CD8-positive, alpha-beta T cell (primary cell): ENCODE measurements at regions of chr19 and their contacts with region 1.

Region 1: GRCh38 chr19:35013031-35013819 is 13.1 kb downstream of the GRAMD1A start:
- DNase-seq: peak; percentile 72 to 92 (median 89)
- ATAC-seq: peak; percentile 81
- H3K4me3 ChIP-seq: peak overlapping the region; percentile 23 to 46
- H3K4me3 Mint-ChIP-seq: peak overlapping the region; percentile 91
- H3K27ac ChIP-seq: peak overlapping the region; percentile 64 to 78
- H3K27ac Mint-ChIP-seq: peak overlapping the region; percentile 99
- H3K4me1 ChIP-seq: peaks cover 74% of the 10 kb centered on the region
- H3K4me1 Mint-ChIP-seq: peaks cover 69% of the 10 kb centered on the region
- H3K27me3 ChIP-seq: no peaks in the 10 kb centered on the region
- H3K27me3 Mint-ChIP-seq: no peaks in the 10 kb centered on the region
- CTCF ChIP-seq: peak; percentile 99

Region 2: GRCh38 chr19:34851353-34851752 is 161.9 kb before region 1 on chr19:
- CTCF ChIA-PET with region 1: no interaction called
- POLR2A ChIA-PET with region 1: no interaction called
- intact Hi-C with region 1: loop called (anchors 5 kb)
- DNase-seq: peak in 2 of 9 experiments; percentile 17 to 32
- ATAC-seq: no peak
- H3K4me3 ChIP-seq: no peak overlapping the region
- H3K4me3 Mint-ChIP-seq: no peak overlapping the region
- H3K27ac ChIP-seq: no peak overlapping the region
- H3K27ac Mint-ChIP-seq: peak overlapping the region; percentile 37
- H3K4me1 ChIP-seq: peaks cover 12% of the 10 kb centered on the region
- H3K4me1 Mint-ChIP-seq: peaks cover 48% of the 10 kb centered on the region
- H3K27me3 ChIP-seq: no peaks in the 10 kb centered on the region
- H3K27me3 Mint-ChIP-seq: no peaks in the 10 kb centered on the region
- CTCF ChIP-seq: no peak

Region 3: DNA sequence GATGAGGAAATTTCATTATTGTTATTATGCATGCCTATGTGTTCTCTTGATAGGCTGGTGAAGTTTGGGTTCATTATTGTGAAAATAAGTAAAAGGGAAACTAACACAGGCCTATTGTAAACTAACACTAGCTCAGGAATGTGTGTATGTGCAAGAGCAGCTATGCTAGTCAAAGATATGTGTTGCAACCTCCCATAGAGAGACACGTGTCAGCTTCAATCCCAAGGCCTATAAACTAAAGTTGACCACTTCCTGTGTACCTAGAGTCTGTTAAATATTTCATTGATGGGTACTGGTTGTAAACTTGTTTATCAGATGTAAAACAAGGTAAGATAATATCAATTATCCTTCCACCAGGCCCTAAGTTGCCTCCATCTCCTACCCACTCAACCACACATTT is 131.2 kb before region 1 on chr19:
- CTCF ChIA-PET with region 1: no interaction called
- POLR2A ChIA-PET with region 1: no interaction called
- intact Hi-C with region 1: no loop called
- DNase-seq: no peak
- ATAC-seq: no peak
- H3K4me3 ChIP-seq: no peak overlapping the region
- H3K4me3 Mint-ChIP-seq: no peak overlapping the region
- H3K27ac ChIP-seq: no peak overlapping the region
- H3K27ac Mint-ChIP-seq: no peak overlapping the region
- H3K4me1 ChIP-seq: no peaks in the 10 kb centered on the region
- H3K4me1 Mint-ChIP-seq: no peaks in the 10 kb centered on the region
- H3K27me3 ChIP-seq: peaks cover 0 to 2% of the 10 kb centered on the region in 2 experiments
- H3K27me3 Mint-ChIP-seq: peaks cover 3% of the 10 kb centered on the region
- CTCF ChIP-seq: no peak

Region 4: GRCh38 chr19:34963573-34964409 is 49.4 kb before region 1 on chr19 and contains the start of gene ZNF792:
- CTCF ChIA-PET with region 1: interaction called, 228 read pairs
- POLR2A ChIA-PET with region 1: interaction called, 12 read pairs
- intact Hi-C with region 1: no loop called
- DNase-seq: peak in 8 of 9 experiments; percentile 34 to 73 (median 46)
- ATAC-seq: peak; percentile 68
- H3K4me3 ChIP-seq: peak within 1 kb of the TSS; percentile 60 to 94
- H3K4me3 Mint-ChIP-seq: peak within 1 kb of the TSS; percentile 90
- H3K27ac ChIP-seq: peak within 1 kb of the TSS; percentile 51 to 57
- H3K27ac Mint-ChIP-seq: peak within 1 kb of the TSS; percentile 92
- H3K4me1 ChIP-seq: peaks cover 16% of the 10 kb centered on the region
- H3K4me1 Mint-ChIP-seq: peaks cover 32% of the 10 kb centered on the region
- H3K27me3 ChIP-seq: no peaks in the 10 kb centered on the region
- H3K27me3 Mint-ChIP-seq: no peaks in the 10 kb centered on the region
- CTCF ChIP-seq: no peak
- total RNA-seq, gene ZNF792: 5.0 to 5.7 TPM

Region 5: DNA sequence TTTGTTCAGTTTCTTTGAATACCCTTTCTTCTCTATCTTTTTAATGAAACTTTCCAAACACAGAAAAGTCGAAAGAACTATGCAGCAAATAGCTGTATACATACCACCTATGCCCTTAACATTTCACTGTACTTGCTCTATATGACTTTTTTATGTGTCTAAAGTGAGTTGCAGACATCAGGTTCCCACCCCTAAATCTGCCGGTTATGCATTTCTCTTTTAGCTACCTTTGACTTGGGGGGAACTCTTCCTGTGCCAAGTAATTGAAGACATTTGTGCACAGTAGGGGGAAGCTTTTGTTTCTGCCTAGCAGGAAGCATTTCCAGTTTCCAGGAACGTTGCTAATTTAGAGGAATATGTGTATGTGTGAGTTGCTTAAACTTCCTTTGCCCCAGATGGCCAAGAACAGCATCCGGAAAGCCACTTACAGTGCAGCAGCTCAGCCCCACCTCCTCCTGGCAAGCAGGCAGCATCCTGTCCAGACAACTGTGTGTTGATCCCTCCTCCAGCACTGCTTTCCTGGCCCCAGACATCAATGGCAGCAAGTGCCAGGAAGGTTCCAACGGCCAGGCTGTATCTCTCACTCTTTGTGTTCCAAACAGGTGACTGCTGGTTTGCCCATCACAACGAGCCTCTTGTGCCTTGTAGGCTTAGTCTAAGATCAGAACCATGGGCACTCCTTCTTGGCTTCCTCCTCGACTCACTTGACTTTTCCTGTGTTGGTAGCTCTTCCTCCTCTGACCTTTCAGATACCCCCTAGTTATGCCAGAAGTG is 27.8 kb before region 1 on chr19:
- CTCF ChIA-PET with region 1: interaction called, 10 read pairs
- POLR2A ChIA-PET with region 1: interaction called, 5 read pairs
- intact Hi-C with region 1: no loop called
- DNase-seq: peak in 5 of 9 experiments; percentile 30 to 70 (median 49)
- ATAC-seq: peak; percentile 65
- H3K4me3 ChIP-seq: peak overlapping the region in 1 of 2 experiments; percentile 12
- H3K4me3 Mint-ChIP-seq: peak overlapping the region; percentile 63
- H3K27ac ChIP-seq: peak overlapping the region; percentile 29 to 36
- H3K27ac Mint-ChIP-seq: peak overlapping the region; percentile 92
- H3K4me1 ChIP-seq: peaks cover 13% of the 10 kb centered on the region
- H3K4me1 Mint-ChIP-seq: peaks cover 14% of the 10 kb centered on the region
- H3K27me3 ChIP-seq: no peaks in the 10 kb centered on the region
- H3K27me3 Mint-ChIP-seq: no peaks in the 10 kb centered on the region
- CTCF ChIP-seq: no peak

Region 6: DNA sequence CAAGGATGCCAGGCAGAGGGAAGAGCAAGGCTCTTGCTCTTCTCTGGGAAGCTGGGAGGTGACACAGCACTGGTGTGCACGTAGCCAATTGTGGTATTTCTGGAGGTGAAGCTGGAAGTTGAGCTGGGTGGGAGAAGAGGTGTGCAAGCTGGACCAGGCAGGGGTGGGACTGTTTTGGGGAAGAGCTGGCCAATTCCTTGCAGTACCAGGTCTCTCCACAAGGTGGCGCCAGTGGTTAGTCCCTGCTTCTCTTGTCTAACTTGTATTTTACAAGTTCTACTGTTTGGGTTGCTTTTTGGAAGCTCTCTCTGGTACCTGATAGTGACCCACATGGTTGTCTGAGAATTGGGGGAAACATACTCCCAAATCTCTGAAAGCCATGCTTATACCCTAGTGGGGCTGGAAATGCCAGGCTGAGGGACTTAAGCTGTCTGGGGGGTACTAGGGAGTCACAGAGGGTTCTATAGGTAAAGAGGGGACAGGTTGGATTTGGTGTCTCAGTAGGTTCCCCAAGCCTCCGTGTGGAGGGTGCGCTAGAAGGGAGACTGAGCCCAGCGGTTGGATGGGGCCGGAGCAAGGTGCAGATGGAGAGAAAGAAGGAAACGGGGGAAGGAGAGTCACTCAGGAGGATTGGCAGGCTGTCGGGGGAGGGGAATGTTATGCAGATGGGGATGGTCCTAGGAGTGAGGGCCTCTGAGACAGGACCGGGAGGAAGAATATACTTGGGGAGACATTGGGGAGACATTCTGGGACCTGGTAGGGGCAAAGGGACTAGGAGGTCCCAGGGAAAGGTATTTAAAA is 31.3 kb after region 1 on chr19:
- CTCF ChIA-PET with region 1: interaction called, 22 read pairs
- POLR2A ChIA-PET with region 1: interaction called, 6 read pairs
- intact Hi-C with region 1: no loop called
- DNase-seq: peak; percentile 39 to 75 (median 65)
- ATAC-seq: peak; percentile 30
- H3K4me3 ChIP-seq: no peak overlapping the region
- H3K4me3 Mint-ChIP-seq: no peak overlapping the region
- H3K27ac ChIP-seq: no peak overlapping the region
- H3K27ac Mint-ChIP-seq: no peak overlapping the region
- H3K4me1 ChIP-seq: peaks cover 28% of the 10 kb centered on the region
- H3K4me1 Mint-ChIP-seq: peaks cover 33% of the 10 kb centered on the region
- H3K27me3 ChIP-seq: peaks cover 0 to 9% of the 10 kb centered on the region in 2 experiments
- H3K27me3 Mint-ChIP-seq: no peaks in the 10 kb centered on the region
- CTCF ChIP-seq: peak; percentile 98

Region 7: DNA sequence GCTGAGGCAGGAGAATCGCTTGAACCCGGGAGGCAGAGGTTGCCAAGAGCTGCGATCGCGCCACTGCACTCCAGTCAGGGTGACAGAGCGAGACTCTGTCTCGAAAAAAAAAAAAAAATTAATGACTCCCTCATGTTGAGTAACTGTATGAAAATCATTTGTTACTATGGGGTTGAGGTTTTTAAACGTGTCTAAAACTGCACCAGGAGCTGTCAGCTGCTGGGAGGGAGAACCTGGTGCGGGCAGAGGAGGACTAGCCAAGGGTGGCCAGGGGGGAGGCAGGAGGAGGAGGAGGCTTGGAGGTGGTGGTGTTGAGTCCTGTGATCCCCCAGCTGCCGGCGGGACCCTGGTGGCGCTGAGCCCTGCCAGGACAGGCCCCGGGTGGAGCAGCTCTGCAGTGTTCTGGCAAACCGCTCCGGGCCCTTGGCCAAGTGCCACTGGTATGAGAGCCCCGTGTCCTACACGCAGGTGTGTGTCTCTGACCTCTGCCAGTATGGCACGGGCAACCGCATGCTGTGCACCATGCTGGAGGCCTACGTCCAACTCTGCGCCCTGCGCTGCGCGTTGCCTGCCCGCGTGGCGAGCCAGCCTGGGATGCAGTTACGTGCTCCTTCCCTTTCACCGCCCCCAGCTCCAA is 85.3 kb after region 1 on chr19:
- CTCF ChIA-PET with region 1: no interaction called
- POLR2A ChIA-PET with region 1: no interaction called
- intact Hi-C with region 1: no loop called
- DNase-seq: no peak
- ATAC-seq: no peak
- H3K4me3 ChIP-seq: no peak overlapping the region
- H3K4me3 Mint-ChIP-seq: no peak overlapping the region
- H3K27ac ChIP-seq: no peak overlapping the region
- H3K27ac Mint-ChIP-seq: no peak overlapping the region
- H3K4me1 ChIP-seq: no peaks in the 10 kb centered on the region
- H3K4me1 Mint-ChIP-seq: no peaks in the 10 kb centered on the region
- H3K27me3 ChIP-seq: no peaks in the 10 kb centered on the region
- H3K27me3 Mint-ChIP-seq: no peaks in the 10 kb centered on the region
- CTCF ChIP-seq: no peak

Region 8: GRCh38 chr19:35124098-35125060 is 111.2 kb after region 1 on chr19:
- CTCF ChIA-PET with region 1: no interaction called
- POLR2A ChIA-PET with region 1: no interaction called
- intact Hi-C with region 1: no loop called
- DNase-seq: peak; percentile 67 to 92 (median 84)
- ATAC-seq: peak; percentile 97
- H3K4me3 ChIP-seq: peak overlapping the region; percentile 46 to 76
- H3K4me3 Mint-ChIP-seq: peak overlapping the region; percentile 80
- H3K27ac ChIP-seq: peak overlapping the region in 1 of 2 experiments; percentile 22
- H3K27ac Mint-ChIP-seq: peak overlapping the region; percentile 65
- H3K4me1 ChIP-seq: peaks cover 13% of the 10 kb centered on the region
- H3K4me1 Mint-ChIP-seq: peaks cover 13% of the 10 kb centered on the region
- H3K27me3 ChIP-seq: no peaks in the 10 kb centered on the region
- H3K27me3 Mint-ChIP-seq: no peaks in the 10 kb centered on the region
- CTCF ChIP-seq: no peak